ENCODE measurements at regions of chr19 and their contacts with region 1.

Region 1: DNA sequence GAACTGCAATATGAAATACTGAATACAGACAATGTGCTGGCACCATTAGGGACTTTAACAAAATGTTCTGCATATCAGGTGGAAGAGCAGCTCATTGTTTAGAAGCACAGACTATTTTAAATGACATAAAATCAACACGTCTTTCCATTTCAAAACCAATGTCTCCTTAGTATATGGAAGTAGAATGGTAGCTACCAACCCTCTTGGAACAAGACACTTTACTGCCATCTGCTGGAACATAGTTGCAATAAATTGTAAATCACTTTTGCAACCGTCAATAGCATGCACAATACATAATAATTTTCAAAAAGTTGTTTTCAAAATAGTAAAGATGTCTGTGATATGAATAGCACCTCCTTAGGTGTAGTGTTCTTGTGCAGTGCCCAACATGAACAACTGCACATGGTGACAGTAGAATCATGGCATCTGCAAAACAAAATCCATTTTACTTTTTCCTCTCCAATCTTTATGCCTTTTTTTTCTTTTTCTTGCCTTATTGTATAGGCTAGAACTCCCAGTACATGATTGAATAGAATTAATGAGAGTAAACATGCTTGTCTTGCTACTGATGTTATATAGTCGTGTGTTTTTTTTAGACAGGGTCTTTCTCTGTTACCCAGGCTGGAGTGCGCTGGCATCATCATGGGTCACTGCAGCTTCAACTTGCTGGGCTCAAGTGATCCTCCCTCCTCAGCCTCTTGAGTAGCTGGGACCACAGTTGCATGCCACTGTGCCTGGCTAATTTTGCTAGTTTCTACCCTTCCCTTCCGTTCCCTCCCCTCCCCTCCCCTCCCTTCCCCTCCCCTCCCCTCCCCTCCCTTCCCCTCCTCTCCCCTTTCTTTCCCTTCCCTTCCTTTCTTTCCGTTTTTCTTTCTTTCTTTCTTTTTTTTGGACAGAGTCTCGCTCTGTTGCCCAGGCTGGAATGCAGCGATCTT is 7.8 kb upstream of the LYPD5 start:
- DNase-seq: no peak
- H3K4me3 ChIP-seq: no peak overlapping the region
- H3K27ac ChIP-seq: no peak overlapping the region
- H3K4me1 ChIP-seq: no peaks in the 10 kb centered on the region
- H3K27me3 ChIP-seq: no peaks in the 10 kb centered on the region
- CTCF ChIP-seq: peak; percentile 57

Region 2: GRCh38 chr19:43545981-43546380 is 264.0 kb before region 1 on chr19:
- intact Hi-C with region 1: loop called (anchors 10 kb)
- DNase-seq: no peak
- H3K4me3 ChIP-seq: no peak overlapping the region
- H3K27ac ChIP-seq: no peak overlapping the region
- H3K4me1 ChIP-seq: no peaks in the 10 kb centered on the region
- H3K27me3 ChIP-seq: no peaks in the 10 kb centered on the region
- CTCF ChIP-seq: no peak

Region 3: DNA sequence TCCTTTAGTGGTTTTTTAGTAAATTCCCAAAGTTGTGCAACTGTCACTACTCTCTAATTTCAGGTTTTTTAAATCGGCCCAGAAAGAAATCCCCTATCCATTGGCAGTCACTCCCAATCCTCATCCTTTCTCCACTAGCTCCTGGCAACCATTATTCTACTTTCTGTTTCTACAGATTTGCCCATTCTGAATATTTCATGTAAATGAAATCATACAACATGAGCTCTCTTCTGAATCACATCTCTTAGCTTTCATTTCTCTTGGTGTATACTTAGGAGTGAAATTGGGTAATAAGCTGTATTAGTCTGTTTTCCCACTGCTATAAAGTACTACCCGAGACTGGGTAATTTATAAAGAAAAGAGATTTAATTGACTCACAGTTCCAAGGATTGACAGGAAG is 232.1 kb after region 1 on chr19:
- intact Hi-C with region 1: no loop called
- DNase-seq: no peak
- H3K4me3 ChIP-seq: no peak overlapping the region
- H3K27ac ChIP-seq: no peak overlapping the region
- H3K4me1 ChIP-seq: no peaks in the 10 kb centered on the region
- H3K27me3 ChIP-seq: no peaks in the 10 kb centered on the region
- CTCF ChIP-seq: no peak

Measured in colonic mucosa (tissue), 4 donors.